GM12878 (cell line): ENCODE measurements at regions of chr1 and their contacts with region 1.

Region 1: GRCh38 chr1:43934101-43934985 is 742 bp downstream of the ARTN start:
- DNase-seq: no peak
- ATAC-seq: peak; percentile 92
- H3K4me3 ChIP-seq: peak overlapping the region; percentile 60
- H3K27ac ChIP-seq: no peak overlapping the region
- H3K4me1 ChIP-seq: peaks cover 11% of the 10 kb centered on the region
- H3K27me3 ChIP-seq: no peaks in the 10 kb centered on the region
- CTCF ChIP-seq: peak; percentile 84 to 92 (median 85)
- EP300 ChIP-seq: no peak
- POLR2A ChIP-seq: no peak
- RAD21 ChIP-seq: peak; percentile 80

Region 2: GRCh38 chr1:43227143-43227764 is 707.1 kb before region 1 on chr1:
- CTCF ChIA-PET with region 1: interaction called, 13 read pairs
- POLR2A ChIA-PET with region 1: no interaction called
- RAD21 ChIA-PET with region 1: interaction called, 7 read pairs
- SMC1A ChIA-PET with region 1: interaction called, 8 read pairs
- in situ Hi-C with region 1: no loop called
- intact Hi-C with region 1: no loop called
- DNase-seq: peak; percentile 34
- ATAC-seq: peak; percentile 99
- H3K4me3 ChIP-seq: no peak overlapping the region
- H3K27ac ChIP-seq: no peak overlapping the region
- H3K4me1 ChIP-seq: no peaks in the 10 kb centered on the region; the same call in none of the 2 replicates
- H3K27me3 ChIP-seq: no peaks in the 10 kb centered on the region
- CTCF ChIP-seq: peak; percentile 91 to 95 (median 94)
- EP300 ChIP-seq: no peak
- POLR2A ChIP-seq: no peak
- RAD21 ChIP-seq: peak; percentile 97

Region 3: DNA sequence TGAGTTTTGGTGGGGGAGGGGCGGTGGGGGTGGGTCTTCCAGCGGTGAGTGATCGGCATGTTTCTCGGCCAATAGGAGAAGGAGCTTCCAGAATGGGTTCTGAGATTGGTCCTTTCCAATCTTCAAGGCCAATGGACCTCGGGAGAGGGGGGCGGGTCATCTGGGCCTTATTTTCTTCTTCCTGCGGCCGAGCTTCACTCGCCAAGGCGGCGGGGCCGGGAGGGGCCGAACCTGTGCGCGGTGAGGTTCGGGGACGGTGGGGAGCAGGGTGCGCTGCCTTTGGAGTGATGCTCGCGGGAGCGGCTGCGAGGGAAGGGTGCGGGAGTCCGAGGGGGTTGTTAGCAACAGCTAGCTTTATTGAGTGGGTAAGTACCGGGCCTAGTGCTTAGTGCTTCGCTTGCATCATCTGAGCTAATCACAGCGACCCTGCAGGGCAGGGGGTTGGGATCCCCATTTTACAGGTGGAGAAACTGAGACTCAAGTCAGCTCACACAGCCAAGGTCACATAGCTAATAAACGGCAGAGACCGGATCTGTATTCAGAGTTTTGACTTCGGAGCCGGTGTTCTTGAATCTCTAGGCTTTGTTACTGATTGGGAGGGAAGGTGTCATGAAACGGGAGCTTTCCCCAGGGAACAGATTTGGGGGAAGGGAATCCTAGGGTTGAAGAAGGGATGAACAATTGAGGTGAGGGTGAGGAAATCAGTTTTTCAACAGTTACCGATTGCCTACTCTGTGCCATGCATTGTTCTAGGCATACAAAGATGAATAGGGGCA is 283.8 kb before region 1 on chr1:
- CTCF ChIA-PET with region 1: interaction called, 95 read pairs
- POLR2A ChIA-PET with region 1: interaction called, 3 read pairs
- RAD21 ChIA-PET with region 1: interaction called, 28 read pairs
- SMC1A ChIA-PET with region 1: interaction called, 14 read pairs
- in situ Hi-C with region 1: no loop called
- intact Hi-C with region 1: no loop called
- DNase-seq: peak; percentile 83
- ATAC-seq: peak; percentile 87
- H3K4me3 ChIP-seq: peak overlapping the region; percentile 98
- H3K27ac ChIP-seq: peak overlapping the region; percentile 85
- H3K4me1 ChIP-seq: peaks cover 10% of the 10 kb centered on the region
- H3K27me3 ChIP-seq: no peaks in the 10 kb centered on the region
- CTCF ChIP-seq: no peak
- EP300 ChIP-seq: no peak
- POLR2A ChIP-seq: peak; percentile 100
- RAD21 ChIP-seq: no peak

Region 4: DNA sequence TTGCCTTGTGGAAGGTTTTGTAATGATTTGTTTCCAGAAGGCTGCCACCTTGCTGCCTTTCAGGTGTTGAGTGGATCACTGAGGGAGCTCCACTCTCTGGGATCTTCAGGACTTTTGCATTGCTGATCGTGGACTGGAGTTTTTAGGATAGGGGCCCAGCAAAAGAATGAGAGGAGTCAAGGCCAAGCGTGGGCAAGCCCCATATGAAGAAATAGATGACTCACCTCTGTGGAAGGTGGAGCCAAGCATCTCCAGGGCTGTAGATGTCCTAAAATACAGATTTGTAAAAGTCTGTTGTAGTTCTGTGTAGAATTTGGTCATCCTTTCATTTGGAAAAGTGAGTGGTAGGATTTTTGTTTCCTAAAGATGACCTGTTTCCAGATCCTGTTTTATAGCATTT is 160.0 kb before region 1 on chr1:
- CTCF ChIA-PET with region 1: interaction called, 1,117 read pairs
- POLR2A ChIA-PET with region 1: interaction called, 4 read pairs
- RAD21 ChIA-PET with region 1: interaction called, 587 read pairs
- SMC1A ChIA-PET with region 1: interaction called, 481 read pairs
- in situ Hi-C with region 1: no loop called
- intact Hi-C with region 1: no loop called
- DNase-seq: no peak
- ATAC-seq: no peak
- H3K4me3 ChIP-seq: no peak overlapping the region
- H3K27ac ChIP-seq: no peak overlapping the region
- H3K4me1 ChIP-seq: peaks cover 9% of the 10 kb centered on the region
- H3K27me3 ChIP-seq: no peaks in the 10 kb centered on the region
- CTCF ChIP-seq: no peak
- EP300 ChIP-seq: no peak
- POLR2A ChIP-seq: no peak
- RAD21 ChIP-seq: no peak

Region 5: GRCh38 chr1:43853161-43853921 is 81.0 kb before region 1 on chr1:
- CTCF ChIA-PET with region 1: interaction called, 16 read pairs
- POLR2A ChIA-PET with region 1: no interaction called
- RAD21 ChIA-PET with region 1: interaction called, 12 read pairs
- SMC1A ChIA-PET with region 1: interaction called, 6 read pairs
- in situ Hi-C with region 1: no loop called
- intact Hi-C with region 1: no loop called
- DNase-seq: peak; percentile 87
- ATAC-seq: peak; percentile 92
- H3K4me3 ChIP-seq: peak overlapping the region; percentile 26; the same call in 1 of the 2 replicates
- H3K27ac ChIP-seq: peak overlapping the region; percentile 67
- H3K4me1 ChIP-seq: peaks cover 13% of the 10 kb centered on the region
- H3K27me3 ChIP-seq: no peaks in the 10 kb centered on the region
- CTCF ChIP-seq: no peak
- EP300 ChIP-seq: no peak
- POLR2A ChIP-seq: no peak
- RAD21 ChIP-seq: no peak

Region 6: GRCh38 chr1:43946236-43947060 is 12.1 kb after region 1 on chr1 and contains the start of gene IPO13:
- CTCF ChIA-PET with region 1: interaction called, 167 read pairs
- POLR2A ChIA-PET with region 1: interaction called, 10 read pairs
- RAD21 ChIA-PET with region 1: interaction called, 54 read pairs
- SMC1A ChIA-PET with region 1: interaction called, 65 read pairs
- in situ Hi-C with region 1: no loop called
- intact Hi-C with region 1: no loop called
- DNase-seq: peak; percentile 89
- ATAC-seq: peak; percentile 96
- H3K4me3 ChIP-seq: peak within 1 kb of the TSS; percentile 96
- H3K27ac ChIP-seq: peak within 1 kb of the TSS; percentile 93
- H3K4me1 ChIP-seq: peaks cover 10% of the 10 kb centered on the region
- H3K27me3 ChIP-seq: no peaks in the 10 kb centered on the region
- CTCF ChIP-seq: peak; percentile 83 to 87 (median 85)
- EP300 ChIP-seq: no peak
- POLR2A ChIP-seq: peak; percentile 95
- RAD21 ChIP-seq: peak; percentile 59
- polyA plus RNA-seq, gene IPO13: 7.1 to 9.5 TPM

Region 7: DNA sequence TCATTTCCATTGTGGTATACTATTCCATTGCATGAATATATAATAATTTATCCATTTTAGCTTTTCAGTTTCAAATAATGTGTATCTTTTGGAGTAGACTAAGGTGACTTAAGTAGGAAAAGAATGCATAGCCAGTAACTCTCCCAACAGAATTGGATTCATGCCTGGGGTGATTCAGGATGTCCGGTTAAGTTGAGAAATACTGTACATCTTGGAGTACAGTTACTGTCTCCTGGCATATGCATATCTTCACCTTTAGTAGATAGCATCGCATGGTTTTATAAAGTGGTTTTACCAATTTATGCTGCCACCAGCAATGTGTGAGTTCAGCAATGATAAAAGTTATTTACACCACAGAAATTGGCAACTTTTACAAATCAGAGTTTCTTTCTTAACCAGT is 115.5 kb after region 1 on chr1:
- CTCF ChIA-PET with region 1: interaction called, 28 read pairs
- POLR2A ChIA-PET with region 1: no interaction called
- RAD21 ChIA-PET with region 1: interaction called, 14 read pairs
- SMC1A ChIA-PET with region 1: interaction called, 19 read pairs
- in situ Hi-C with region 1: no loop called
- intact Hi-C with region 1: no loop called
- DNase-seq: no peak
- ATAC-seq: no peak
- H3K4me3 ChIP-seq: no peak overlapping the region
- H3K27ac ChIP-seq: no peak overlapping the region
- H3K4me1 ChIP-seq: no peaks in the 10 kb centered on the region
- H3K27me3 ChIP-seq: no peaks in the 10 kb centered on the region
- CTCF ChIP-seq: no peak
- EP300 ChIP-seq: no peak
- POLR2A ChIP-seq: no peak
- RAD21 ChIP-seq: no peak

Region 8: GRCh38 chr1:44170281-44170823 is 236.0 kb after region 1 on chr1:
- CTCF ChIA-PET with region 1: no interaction called
- POLR2A ChIA-PET with region 1: no interaction called
- RAD21 ChIA-PET with region 1: no interaction called
- SMC1A ChIA-PET with region 1: no interaction called
- in situ Hi-C with region 1: no loop called
- intact Hi-C with region 1: no loop called
- DNase-seq: no peak
- ATAC-seq: no peak
- H3K4me3 ChIP-seq: no peak overlapping the region
- H3K27ac ChIP-seq: no peak overlapping the region
- H3K4me1 ChIP-seq: no peaks in the 10 kb centered on the region
- H3K27me3 ChIP-seq: peaks cover 0 to 2% of the 10 kb centered on the region in 2 experiments; a peak in 1 of 4 replicates
- CTCF ChIP-seq: no peak
- EP300 ChIP-seq: no peak
- POLR2A ChIP-seq: no peak
- RAD21 ChIP-seq: no peak